Activated CD8-positive, alpha-beta T cell treated with anti-CD3 and anti-CD28 coated beads for 36 hours (primary cell): ENCODE measurements at regions of chr16 and their contacts with region 1.

Region 1: DNA sequence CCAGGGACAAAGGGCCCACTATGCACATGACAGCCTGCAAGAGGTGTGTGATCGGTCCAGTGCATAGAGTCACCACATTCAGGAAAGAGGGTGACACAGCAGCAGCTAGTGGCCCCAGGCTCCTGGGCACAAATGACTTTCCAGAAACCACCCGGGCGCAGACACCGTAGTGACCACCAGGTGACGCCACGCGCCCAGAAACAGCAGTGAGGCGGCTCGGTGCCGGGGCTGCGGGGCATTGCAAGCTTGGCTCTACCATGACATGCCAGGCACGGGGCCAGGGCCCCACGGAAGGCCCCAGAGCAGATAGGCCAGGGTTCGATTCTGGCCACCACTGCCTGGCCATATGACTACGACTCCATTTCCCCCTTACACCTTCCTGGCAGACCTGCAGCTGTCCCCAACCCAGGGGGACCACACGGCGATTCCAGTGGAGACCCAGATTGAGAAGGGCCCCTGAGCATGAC is 6.7 kb downstream of the RHBDF1 start:
- DNase-seq: peak; percentile 93
- ATAC-seq: peak; percentile 97
- H3K4me3 Mint-ChIP-seq: no peak overlapping the region
- H3K27ac Mint-ChIP-seq: no peak overlapping the region
- H3K4me1 Mint-ChIP-seq: no peaks in the 10 kb centered on the region
- H3K27me3 Mint-ChIP-seq: peaks cover under 1% of the 10 kb centered on the region
- CTCF ChIP-seq: peak; percentile 94

Region 2: DNA sequence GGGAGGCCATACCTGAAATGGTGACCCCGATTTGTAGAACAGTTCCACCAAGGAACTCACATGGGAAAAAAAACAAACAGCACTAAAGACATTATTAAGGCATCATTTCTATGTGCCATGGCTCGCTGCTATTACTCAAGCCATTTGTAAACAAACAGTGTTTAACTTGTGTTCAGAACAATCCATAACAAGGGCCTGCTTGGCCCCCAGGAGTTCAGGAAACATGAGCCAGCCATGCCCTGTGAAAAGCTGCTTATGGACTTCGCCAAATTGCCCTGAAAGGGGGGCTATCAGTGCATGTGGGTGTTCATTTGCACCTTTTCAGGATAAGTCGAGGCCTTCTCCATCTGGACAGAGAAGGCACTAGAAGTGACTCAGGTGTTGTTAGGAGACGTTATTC is 20.2 kb before region 1 on chr16:
- CTCF ChIA-PET with region 1: interaction called, 16 read pairs
- POLR2A ChIA-PET with region 1: interaction called, 4 read pairs
- intact Hi-C with region 1: no loop called
- DNase-seq: no peak
- ATAC-seq: no peak
- H3K4me3 Mint-ChIP-seq: no peak overlapping the region
- H3K27ac Mint-ChIP-seq: no peak overlapping the region
- H3K4me1 Mint-ChIP-seq: peaks cover 37% of the 10 kb centered on the region
- H3K27me3 Mint-ChIP-seq: no peaks in the 10 kb centered on the region
- CTCF ChIP-seq: no peak

Region 3: GRCh38 chr16:77807-78443 is 12.2 kb after region 1 on chr16 and contains the start of gene MPG:
- CTCF ChIA-PET with region 1: interaction called, 46 read pairs
- POLR2A ChIA-PET with region 1: interaction called, 9 read pairs
- intact Hi-C with region 1: no loop called
- DNase-seq: peak; percentile 83
- ATAC-seq: peak; percentile 81
- H3K4me3 Mint-ChIP-seq: peak within 1 kb of the TSS; percentile 88
- H3K27ac Mint-ChIP-seq: peak within 1 kb of the TSS; percentile 87
- H3K4me1 Mint-ChIP-seq: peaks cover 33% of the 10 kb centered on the region
- H3K27me3 Mint-ChIP-seq: peaks cover 16% of the 10 kb centered on the region
- CTCF ChIP-seq: no peak
- total RNA-seq, gene MPG: 51.7 to 54.2 TPM

Region 4: GRCh38 chr16:96935-97381 is 31.3 kb after region 1 on chr16:
- CTCF ChIA-PET with region 1: interaction called, 458 read pairs
- POLR2A ChIA-PET with region 1: interaction called, 12 read pairs
- intact Hi-C with region 1: loop called (anchors 1 kb)
- DNase-seq: peak; percentile 95
- ATAC-seq: peak; percentile 99
- H3K4me3 Mint-ChIP-seq: no peak overlapping the region
- H3K27ac Mint-ChIP-seq: no peak overlapping the region
- H3K4me1 Mint-ChIP-seq: peaks cover 6% of the 10 kb centered on the region
- H3K27me3 Mint-ChIP-seq: no peaks in the 10 kb centered on the region
- CTCF ChIP-seq: peak; percentile 99

Region 5: GRCh38 chr16:180938-181667 is 115.4 kb after region 1 on chr16:
- CTCF ChIA-PET with region 1: interaction called, 25 read pairs
- POLR2A ChIA-PET with region 1: interaction called, 3 read pairs
- intact Hi-C with region 1: no loop called
- DNase-seq: peak; percentile 91
- ATAC-seq: peak; percentile 88
- H3K4me3 Mint-ChIP-seq: peak overlapping the region; percentile 38
- H3K27ac Mint-ChIP-seq: no peak overlapping the region
- H3K4me1 Mint-ChIP-seq: peaks cover 4% of the 10 kb centered on the region
- H3K27me3 Mint-ChIP-seq: peaks cover 23% of the 10 kb centered on the region
- CTCF ChIP-seq: peak; percentile 98

Region 6: DNA sequence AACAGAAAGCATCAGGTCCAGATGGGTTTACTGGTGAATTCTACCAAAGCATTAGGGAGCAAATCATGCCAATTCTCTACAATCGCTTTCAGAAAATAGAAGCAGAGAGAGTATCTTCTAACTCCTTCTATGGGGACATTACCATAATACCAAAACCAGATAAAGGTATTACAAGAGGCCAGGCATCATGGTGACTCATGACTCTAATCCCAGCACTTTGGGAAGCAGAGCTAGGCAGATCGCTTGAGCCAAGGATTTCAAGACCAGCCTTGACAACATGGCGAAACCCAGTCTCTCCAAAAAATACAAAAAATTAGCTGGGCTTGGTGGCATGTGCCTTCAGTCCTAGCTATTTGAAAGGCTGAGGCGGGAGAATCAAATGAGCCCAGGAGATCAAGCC is 137.5 kb after region 1 on chr16:
- CTCF ChIA-PET with region 1: no interaction called
- POLR2A ChIA-PET with region 1: no interaction called
- intact Hi-C with region 1: no loop called
- DNase-seq: no peak
- ATAC-seq: no peak
- H3K4me3 Mint-ChIP-seq: no peak overlapping the region
- H3K27ac Mint-ChIP-seq: no peak overlapping the region
- H3K4me1 Mint-ChIP-seq: peaks cover 6% of the 10 kb centered on the region
- H3K27me3 Mint-ChIP-seq: no peaks in the 10 kb centered on the region
- CTCF ChIP-seq: no peak

Region 7: GRCh38 chr16:442976-443375 is 377.3 kb after region 1 on chr16:
- CTCF ChIA-PET with region 1: no interaction called
- POLR2A ChIA-PET with region 1: no interaction called
- intact Hi-C with region 1: no loop called
- DNase-seq: no peak
- ATAC-seq: no peak
- H3K4me3 Mint-ChIP-seq: no peak overlapping the region
- H3K27ac Mint-ChIP-seq: no peak overlapping the region
- H3K4me1 Mint-ChIP-seq: no peaks in the 10 kb centered on the region
- H3K27me3 Mint-ChIP-seq: no peaks in the 10 kb centered on the region
- CTCF ChIP-seq: no peak